ENCODE measurements at regions of chr10 and their contacts with region 1.

Region 1: DNA sequence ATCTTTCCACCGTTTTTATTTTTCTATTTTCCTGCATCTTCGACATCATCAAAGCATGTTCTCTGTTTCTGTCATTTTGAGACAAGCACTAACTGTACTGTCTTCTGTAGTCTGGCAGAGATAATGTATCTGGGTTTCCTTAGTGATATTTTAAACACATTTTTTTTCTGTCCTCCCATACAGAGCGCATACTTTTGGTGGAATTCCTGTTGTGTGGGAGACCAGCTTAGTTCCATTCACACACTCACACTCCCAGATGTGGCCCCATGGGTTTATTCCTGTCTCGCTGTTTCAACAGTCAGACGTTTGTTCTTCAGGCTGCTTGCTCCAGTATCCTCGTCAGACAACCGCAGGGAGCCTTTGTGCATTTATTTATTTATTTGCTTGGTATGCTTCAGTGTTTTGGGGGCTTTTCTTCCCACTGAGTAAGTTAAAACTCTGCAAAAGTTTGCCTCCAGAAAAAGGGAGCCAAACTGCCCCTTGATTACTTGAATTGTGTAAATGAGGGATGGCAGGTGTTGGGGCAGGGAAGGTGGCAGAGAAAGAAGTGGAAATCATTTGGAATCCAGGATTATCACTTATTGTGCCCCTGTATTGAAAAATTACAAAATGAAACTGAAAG is 456.8 kb upstream of the KLF6 start:
- DNase-seq: peak; percentile 100
- ATAC-seq: peak; percentile 82
- H3K4me3 ChIP-seq: peak overlapping the region; percentile 4; the same call in 1 of the 2 replicates
- H3K27ac ChIP-seq: peak overlapping the region; percentile 68
- H3K4me1 ChIP-seq: peaks cover 11% of the 10 kb centered on the region
- H3K27me3 ChIP-seq: no peaks in the 10 kb centered on the region
- CTCF ChIP-seq: no peak
- POLR2A ChIP-seq: peak; percentile 73; the same call in 1 of the 2 replicates
- RAD21 ChIP-seq: peak; percentile 20; the same call in 1 of the 2 replicates

Region 2: GRCh38 chr10:3197348-3198003 is 1044.4 kb before region 1 on chr10:
- CTCF ChIA-PET with region 1: interaction called, 9 read pairs
- POLR2A ChIA-PET with region 1: no interaction called
- dilution Hi-C with region 1: no loop called
- in situ Hi-C with region 1: no loop called
- intact Hi-C with region 1: loop called (anchors 10 kb)
- DNase-seq: peak; percentile 84
- ATAC-seq: peak; percentile 91
- H3K4me3 ChIP-seq: peak overlapping the region; percentile 37
- H3K27ac ChIP-seq: peak overlapping the region; percentile 12
- H3K4me1 ChIP-seq: peaks cover 10% of the 10 kb centered on the region
- H3K27me3 ChIP-seq: peaks cover 9% of the 10 kb centered on the region
- CTCF ChIP-seq: peak; percentile 95
- POLR2A ChIP-seq: peak; percentile 66
- RAD21 ChIP-seq: peak; percentile 98

Region 3: GRCh38 chr10:3239066-3239919 is 1002.5 kb before region 1 on chr10:
- CTCF ChIA-PET with region 1: no interaction called
- POLR2A ChIA-PET with region 1: no interaction called
- dilution Hi-C with region 1: no loop called
- in situ Hi-C with region 1: no loop called
- intact Hi-C with region 1: loop called (anchors 10 kb)
- DNase-seq: peak; percentile 68
- ATAC-seq: peak; percentile 94
- H3K4me3 ChIP-seq: no peak overlapping the region
- H3K27ac ChIP-seq: peak overlapping the region; percentile 77; the same call in 1 of the 2 replicates
- H3K4me1 ChIP-seq: peaks cover 9% of the 10 kb centered on the region; the same call in 1 of the 2 replicates
- H3K27me3 ChIP-seq: no peaks in the 10 kb centered on the region
- CTCF ChIP-seq: peak; percentile 91
- POLR2A ChIP-seq: 0 out of 2 replicates have a peak, but pooled peaks have one; percentile 25
- RAD21 ChIP-seq: peak; percentile 99

Region 4: GRCh38 chr10:3852147-3852904 is 389.5 kb before region 1 on chr10:
- CTCF ChIA-PET with region 1: no interaction called
- POLR2A ChIA-PET with region 1: no interaction called
- dilution Hi-C with region 1: no loop called
- in situ Hi-C with region 1: no loop called
- intact Hi-C with region 1: loop called (anchors 5 kb)
- DNase-seq: peak; percentile 99
- ATAC-seq: peak; percentile 88
- H3K4me3 ChIP-seq: no peak overlapping the region
- H3K27ac ChIP-seq: peak overlapping the region; percentile 85
- H3K4me1 ChIP-seq: peaks cover 19% of the 10 kb centered on the region
- H3K27me3 ChIP-seq: no peaks in the 10 kb centered on the region
- CTCF ChIP-seq: no peak
- POLR2A ChIP-seq: peak; percentile 12
- RAD21 ChIP-seq: no peak; the same call in 1 of the 2 replicates

Region 5: DNA sequence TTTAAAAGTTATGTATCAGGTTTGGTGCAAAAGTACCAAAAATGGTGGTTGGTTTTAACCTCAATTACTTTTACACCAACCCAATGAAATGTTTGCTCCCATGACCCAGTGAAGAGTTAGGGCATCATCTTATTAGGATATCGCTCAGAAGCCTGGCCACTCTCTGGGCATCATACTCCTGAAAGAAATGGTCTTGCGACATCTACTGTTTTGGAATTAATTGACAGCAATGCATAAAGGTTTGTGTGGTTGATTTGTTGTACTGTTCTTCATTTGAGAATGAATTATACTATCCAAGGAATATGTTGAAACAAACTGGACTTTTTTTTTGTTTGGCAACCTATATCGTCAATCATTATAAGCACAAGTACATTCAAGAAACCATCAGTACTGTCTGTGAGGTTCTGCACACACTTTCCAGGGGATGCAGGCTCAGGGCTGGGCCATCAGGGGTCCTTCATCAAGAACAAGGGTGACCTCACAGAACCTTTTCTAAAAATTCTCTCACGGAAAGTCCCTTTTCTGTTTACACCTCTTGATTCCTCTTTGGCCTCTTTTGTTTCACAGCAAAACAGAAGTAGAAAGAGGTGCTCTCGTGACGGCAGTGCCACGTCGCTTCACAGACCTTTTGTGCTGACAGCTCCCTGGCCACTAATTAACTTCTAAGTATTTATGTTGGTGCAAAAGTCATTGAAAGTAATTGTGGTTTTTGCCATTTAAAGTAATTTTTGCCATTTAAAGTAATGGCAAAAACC is 339.6 kb before region 1 on chr10:
- CTCF ChIA-PET with region 1: no interaction called
- POLR2A ChIA-PET with region 1: no interaction called
- dilution Hi-C with region 1: no loop called
- in situ Hi-C with region 1: no loop called
- intact Hi-C with region 1: loop called (anchors 1 kb)
- DNase-seq: no peak
- ATAC-seq: no peak
- H3K4me3 ChIP-seq: no peak overlapping the region
- H3K27ac ChIP-seq: peak overlapping the region; percentile 6; the same call in 1 of the 2 replicates
- H3K4me1 ChIP-seq: peaks cover 10% of the 10 kb centered on the region
- H3K27me3 ChIP-seq: no peaks in the 10 kb centered on the region
- CTCF ChIP-seq: no peak
- POLR2A ChIP-seq: no peak
- RAD21 ChIP-seq: no peak

Region 6: GRCh38 chr10:4344511-4344994 is 102.7 kb after region 1 on chr10:
- CTCF ChIA-PET with region 1: interaction called, 3 read pairs
- POLR2A ChIA-PET with region 1: no interaction called
- dilution Hi-C with region 1: no loop called
- in situ Hi-C with region 1: no loop called
- intact Hi-C with region 1: loop called (anchors 1 kb)
- DNase-seq: peak; percentile 100
- ATAC-seq: peak; percentile 99
- H3K4me3 ChIP-seq: no peak overlapping the region
- H3K27ac ChIP-seq: peak overlapping the region; percentile 82
- H3K4me1 ChIP-seq: peaks cover 9% of the 10 kb centered on the region
- H3K27me3 ChIP-seq: no peaks in the 10 kb centered on the region
- CTCF ChIP-seq: peak; percentile 30; the same call in 1 of the 2 replicates
- POLR2A ChIP-seq: peak; percentile 13; the same call in 1 of the 2 replicates
- RAD21 ChIP-seq: peak; percentile 53

Region 7: GRCh38 chr10:4663162-4663904 is 421.5 kb after region 1 on chr10:
- CTCF ChIA-PET with region 1: no interaction called
- POLR2A ChIA-PET with region 1: no interaction called
- dilution Hi-C with region 1: no loop called
- in situ Hi-C with region 1: loop called (anchors 10 kb)
- intact Hi-C with region 1: loop called (anchors 5 kb)
- DNase-seq: peak; percentile 99
- ATAC-seq: peak; percentile 94
- H3K4me3 ChIP-seq: peak overlapping the region; percentile 8; the same call in 1 of the 2 replicates
- H3K27ac ChIP-seq: peak overlapping the region; percentile 92
- H3K4me1 ChIP-seq: peaks cover 15% of the 10 kb centered on the region
- H3K27me3 ChIP-seq: no peaks in the 10 kb centered on the region
- CTCF ChIP-seq: no peak
- POLR2A ChIP-seq: peak; percentile 86
- RAD21 ChIP-seq: peak; percentile 6; the same call in 1 of the 2 replicates